ENCODE measurements at regions of chrX and their contacts with region 1.

Region 1: GRCh38 chrX:108369702-108370101 is 68.5 kb downstream of the COL4A6 start:
- DNase-seq: no peak
- ATAC-seq: no peak
- H3K4me3 ChIP-seq: no peak overlapping the region
- H3K4me3 Mint-ChIP-seq: no peak overlapping the region
- H3K27ac ChIP-seq: no peak overlapping the region
- H3K27ac Mint-ChIP-seq: no peak overlapping the region
- H3K4me1 ChIP-seq: no peaks in the 10 kb centered on the region
- H3K4me1 Mint-ChIP-seq: no peaks in the 10 kb centered on the region
- H3K27me3 ChIP-seq: no peaks in the 10 kb centered on the region
- H3K27me3 Mint-ChIP-seq: no peaks in the 10 kb centered on the region
- CTCF ChIP-seq: no peak

Region 2: DNA sequence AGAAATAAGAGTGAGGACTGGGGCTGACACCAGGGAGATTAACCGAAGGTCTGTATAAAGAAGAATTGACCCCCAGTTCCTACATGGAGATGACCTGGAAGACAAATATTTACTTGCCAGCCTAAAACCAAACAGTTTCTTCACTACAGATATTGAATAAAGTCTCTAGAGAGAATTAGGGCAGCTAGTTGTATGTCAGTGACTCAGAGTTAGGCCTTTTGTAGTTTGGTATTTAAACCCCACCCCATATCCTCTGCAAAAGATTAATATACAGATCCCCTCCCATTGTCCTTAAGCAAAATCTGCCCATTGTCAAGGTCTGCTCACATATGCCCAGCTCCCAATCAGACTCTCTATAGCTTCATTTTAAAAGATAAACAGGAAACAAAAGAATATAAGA is 948.3 kb before region 1 on chrX:
- CTCF ChIA-PET with region 1: no interaction called
- POLR2A ChIA-PET with region 1: no interaction called
- intact Hi-C with region 1: no loop called
- DNase-seq: no peak
- ATAC-seq: no peak
- H3K4me3 ChIP-seq: no peak overlapping the region
- H3K4me3 Mint-ChIP-seq: no peak overlapping the region
- H3K27ac ChIP-seq: no peak overlapping the region
- H3K27ac Mint-ChIP-seq: no peak overlapping the region
- H3K4me1 ChIP-seq: no peaks in the 10 kb centered on the region
- H3K4me1 Mint-ChIP-seq: no peaks in the 10 kb centered on the region
- H3K27me3 ChIP-seq: no peaks in the 10 kb centered on the region
- H3K27me3 Mint-ChIP-seq: peaks cover 13% of the 10 kb centered on the region
- CTCF ChIP-seq: no peak

Region 3: DNA sequence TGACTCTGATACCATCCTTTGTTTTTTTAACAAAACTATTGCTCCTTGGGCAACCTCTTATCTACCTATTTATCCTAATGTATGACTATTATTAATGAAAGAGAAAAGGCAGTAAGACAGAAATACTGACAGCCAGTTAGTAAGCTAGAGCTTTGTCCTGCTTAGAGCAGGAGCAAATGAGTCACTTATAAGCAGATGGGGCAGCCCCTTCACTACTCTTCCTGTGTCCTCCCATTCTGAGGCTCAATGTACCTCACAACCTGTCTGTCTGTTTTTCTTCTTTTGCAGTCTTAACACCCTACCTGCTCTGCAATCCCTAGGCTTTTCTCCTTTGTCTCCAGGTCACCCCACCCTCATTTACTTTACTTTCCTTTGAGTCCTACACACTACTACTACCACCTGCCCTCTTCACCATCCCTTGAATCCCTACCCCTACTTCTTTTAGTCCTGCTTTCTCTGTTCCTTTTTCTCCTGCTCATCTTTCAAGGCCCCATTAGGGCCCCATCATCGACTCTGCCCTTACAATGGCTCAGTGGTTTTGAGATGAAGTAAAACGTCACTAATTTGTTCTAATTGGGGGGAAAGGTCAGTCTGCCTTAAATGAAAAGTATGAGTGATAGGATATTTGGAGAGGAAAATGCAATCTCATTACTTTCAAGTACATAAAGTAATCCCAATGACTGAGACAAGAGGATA is 817.9 kb after region 1 on chrX:
- CTCF ChIA-PET with region 1: no interaction called
- POLR2A ChIA-PET with region 1: no interaction called
- intact Hi-C with region 1: loop called in 1 of 2 experiments (anchors 5 kb)
- DNase-seq: no peak
- ATAC-seq: no peak
- H3K4me3 ChIP-seq: no peak overlapping the region
- H3K4me3 Mint-ChIP-seq: no peak overlapping the region
- H3K27ac ChIP-seq: no peak overlapping the region
- H3K27ac Mint-ChIP-seq: no peak overlapping the region
- H3K4me1 ChIP-seq: no peaks in the 10 kb centered on the region
- H3K4me1 Mint-ChIP-seq: no peaks in the 10 kb centered on the region
- H3K27me3 ChIP-seq: no peaks in the 10 kb centered on the region
- H3K27me3 Mint-ChIP-seq: no peaks in the 10 kb centered on the region
- CTCF ChIP-seq: no peak